ENCODE measurements at regions of chr19 and their contacts with region 1.

Region 1: GRCh38 chr19:36214386-36215275 is at the starts of genes ZNF146 and ZNF565:
- DNase-seq: peak; percentile 94
- H3K4me3 Mint-ChIP-seq: no peak within 1 kb of the TSS
- H3K27ac Mint-ChIP-seq: no peak within 1 kb of the TSS
- H3K4me1 Mint-ChIP-seq: no peaks in the 10 kb centered on the region
- H3K27me3 Mint-ChIP-seq: no peaks in the 10 kb centered on the region
- total RNA-seq, gene ZNF146: 82.5 and 94.0 TPM in 2 replicates
- total RNA-seq, gene ZNF565: 2.1 and 2.4 TPM in 2 replicates

Region 2: DNA sequence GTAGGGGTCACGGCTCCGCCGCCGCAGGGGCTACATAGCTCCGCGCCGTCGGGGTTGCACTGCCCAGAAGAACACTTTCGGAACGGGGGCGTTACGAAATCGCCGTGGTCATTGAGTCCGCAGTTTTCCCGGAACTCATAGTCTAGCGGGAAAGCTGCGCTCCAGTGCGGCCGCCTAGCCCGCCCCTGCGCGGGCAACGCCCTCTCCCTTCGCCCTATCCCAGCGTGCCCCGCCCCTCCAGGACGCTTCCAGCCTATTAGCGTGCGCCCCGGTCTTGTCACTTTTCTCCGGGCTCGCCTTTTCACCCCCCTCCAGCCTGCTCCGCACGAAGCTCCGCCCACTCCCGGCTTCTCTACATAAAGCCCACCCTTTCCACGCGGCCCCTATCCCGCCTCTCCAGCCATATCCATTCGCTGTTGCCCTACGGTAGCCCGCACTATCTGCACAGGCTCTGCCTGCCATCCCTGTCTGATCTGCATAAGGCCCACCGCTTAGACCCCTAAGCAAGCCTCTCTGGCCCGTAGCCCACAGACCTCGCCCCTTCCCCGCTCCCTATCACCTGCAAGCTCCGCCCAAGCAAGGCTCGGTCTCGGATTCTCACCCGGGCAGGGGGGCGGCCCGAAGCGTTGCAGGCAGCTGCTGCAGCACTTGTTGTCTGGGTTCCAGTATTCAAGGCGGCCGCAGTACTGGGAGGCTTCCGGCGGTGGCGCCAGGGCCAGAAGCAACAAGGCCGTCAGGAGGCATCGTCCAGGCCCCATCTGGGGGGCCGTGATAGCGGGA is 474.0 kb before region 1 on chr19:
- intact Hi-C with region 1: loop called (anchors 5 kb)
- DNase-seq: peak; percentile 95
- H3K4me3 Mint-ChIP-seq: peak overlapping the region; percentile 93
- H3K27ac Mint-ChIP-seq: peak overlapping the region; percentile 93
- H3K4me1 Mint-ChIP-seq: peaks cover 23% of the 10 kb centered on the region
- H3K27me3 Mint-ChIP-seq: peaks cover 2% of the 10 kb centered on the region

Region 3: DNA sequence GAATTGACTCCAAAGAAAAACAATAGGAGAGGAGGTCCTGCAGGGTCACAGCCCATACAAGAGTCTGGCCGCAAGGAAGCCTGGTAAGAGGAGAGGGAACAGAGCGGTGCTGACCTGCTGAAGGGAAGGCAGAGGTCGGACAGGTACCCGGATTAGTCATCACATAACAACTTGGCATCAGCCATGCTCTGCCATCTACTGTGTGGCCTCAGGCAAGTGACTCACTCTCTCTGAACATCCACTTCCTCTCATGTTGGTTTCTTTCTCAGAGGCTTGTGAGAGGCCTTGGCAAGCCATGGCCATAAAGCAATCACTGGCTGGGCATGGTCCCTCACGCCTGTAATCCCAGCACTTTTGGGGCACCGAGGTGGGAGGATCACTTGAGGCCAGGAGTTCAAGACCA is 82.1 kb before region 1 on chr19:
- intact Hi-C with region 1: loop called (anchors 1 kb)
- DNase-seq: peak; percentile 17
- H3K4me3 Mint-ChIP-seq: peak overlapping the region; percentile 7
- H3K27ac Mint-ChIP-seq: peak overlapping the region; percentile 78
- H3K4me1 Mint-ChIP-seq: peaks cover 30% of the 10 kb centered on the region
- H3K27me3 Mint-ChIP-seq: peaks cover 1% of the 10 kb centered on the region

Region 4: DNA sequence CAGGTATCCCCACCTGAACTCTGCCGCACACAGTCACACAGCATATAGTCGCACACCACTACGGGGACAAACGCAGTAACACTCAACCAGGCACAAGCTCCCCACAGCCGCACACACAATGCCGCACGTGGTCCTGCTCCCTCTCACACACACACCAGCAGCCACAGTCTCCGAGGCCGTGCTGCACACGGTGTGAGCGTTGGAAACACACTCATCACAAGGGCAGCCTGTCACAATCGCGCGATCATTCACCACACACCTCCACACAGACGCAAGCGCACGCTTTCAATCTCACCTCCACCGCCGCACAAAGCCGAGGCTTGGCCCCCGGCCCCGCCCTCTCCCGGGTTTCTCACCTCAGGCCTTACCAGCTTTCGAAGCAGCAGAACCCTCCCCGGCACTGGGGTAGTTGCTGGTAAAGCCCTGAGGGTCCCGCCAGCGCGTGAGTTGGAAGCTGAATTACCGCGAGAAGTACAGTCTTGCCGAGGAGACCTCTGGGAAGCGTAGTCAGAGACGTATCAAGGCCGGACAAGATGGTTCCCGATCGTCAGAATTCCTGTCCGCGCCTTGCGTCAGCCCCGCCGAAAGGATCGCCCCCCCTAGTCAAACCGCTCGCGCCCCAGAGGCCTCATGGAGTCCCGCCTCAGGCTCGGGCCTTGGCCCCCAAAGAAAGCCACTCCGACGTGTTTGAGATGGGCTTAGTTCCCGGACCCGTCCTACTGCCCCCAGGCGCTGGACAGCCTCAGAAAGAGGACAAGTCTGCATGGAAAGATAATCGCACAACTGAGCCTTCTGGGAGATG is 274.7 kb after region 1 on chr19 and contains the start of gene ZNF566:
- intact Hi-C with region 1: loop called (anchors 1 kb)
- DNase-seq: peak; percentile 88
- H3K4me3 Mint-ChIP-seq: peak within 1 kb of the TSS; percentile 96
- H3K27ac Mint-ChIP-seq: peak within 1 kb of the TSS; percentile 97
- H3K4me1 Mint-ChIP-seq: peaks cover 18% of the 10 kb centered on the region
- H3K27me3 Mint-ChIP-seq: no peaks in the 10 kb centered on the region
- total RNA-seq, gene ZNF566: 6.9 and 8.7 TPM in 2 replicates

Region 5: GRCh38 chr19:36687214-36688056 is 472.8 kb after region 1 on chr19 and contains the start of gene ZNF567:
- intact Hi-C with region 1: loop called (anchors 1 kb)
- DNase-seq: peak; percentile 97
- H3K4me3 Mint-ChIP-seq: peak within 1 kb of the TSS; percentile 95
- H3K27ac Mint-ChIP-seq: peak within 1 kb of the TSS; percentile 91
- H3K4me1 Mint-ChIP-seq: peaks cover 24% of the 10 kb centered on the region
- H3K27me3 Mint-ChIP-seq: peaks cover 2% of the 10 kb centered on the region
- total RNA-seq, gene ZNF567: 5.8 and 8.5 TPM in 2 replicates

Region 6: DNA sequence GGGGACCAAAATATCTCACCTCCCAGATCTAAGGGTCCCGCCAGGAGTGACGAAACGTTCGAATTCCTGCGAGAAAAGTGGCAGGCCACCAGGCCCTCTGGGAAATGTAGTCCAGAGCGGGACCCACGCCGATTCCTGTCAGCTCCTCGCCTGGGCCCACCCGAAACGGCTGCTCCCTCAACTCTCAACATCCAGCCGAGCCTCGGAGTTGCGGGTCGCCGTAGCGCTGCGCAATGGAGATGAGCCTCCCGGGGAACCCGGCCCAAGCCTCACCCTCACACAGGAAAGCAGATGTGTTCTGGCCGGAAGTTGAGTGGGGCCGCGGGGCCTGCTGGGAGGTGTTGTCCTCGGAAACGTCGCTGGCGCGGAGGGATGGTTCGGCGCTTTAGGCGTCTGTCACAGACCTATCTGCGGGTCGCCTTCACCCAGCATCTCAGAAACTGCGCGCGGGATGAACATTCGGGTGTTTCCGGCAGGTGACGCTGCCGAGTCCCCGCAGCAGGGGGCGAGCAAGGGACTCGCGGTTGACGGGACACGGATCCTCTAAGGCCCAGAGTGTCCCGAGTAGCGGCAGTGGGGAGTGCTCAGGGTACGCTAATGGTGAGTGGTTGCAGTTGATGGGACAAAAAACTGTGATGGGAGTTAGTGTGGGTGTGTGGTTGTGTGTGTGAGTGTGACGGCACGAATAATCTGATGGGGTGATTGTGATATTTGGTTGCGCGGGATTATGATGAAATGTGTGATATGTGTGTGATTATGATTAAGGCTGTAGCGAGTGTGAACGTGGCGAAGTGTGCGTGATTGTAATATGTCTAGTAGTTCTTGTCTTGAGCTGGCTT is 701.6 kb after region 1 on chr19 and contains the starts of genes ZNF568 and ZNF829:
- intact Hi-C with region 1: loop called (anchors 1 kb)
- DNase-seq: peak; percentile 92
- H3K4me3 Mint-ChIP-seq: peak within 1 kb of the TSS; percentile 92
- H3K27ac Mint-ChIP-seq: peak within 1 kb of the TSS; percentile 95
- H3K4me1 Mint-ChIP-seq: peaks cover 21% of the 10 kb centered on the region
- H3K27me3 Mint-ChIP-seq: no peaks in the 10 kb centered on the region
- total RNA-seq, gene ZNF568: 4.4 and 4.9 TPM in 2 replicates
- total RNA-seq, gene ZNF829: 5.3 and 5.4 TPM in 2 replicates

Region 7: GRCh38 chr19:37370880-37371661 is 1156.4 kb after region 1 on chr19 and contains the start of gene ZNF527:
- intact Hi-C with region 1: loop called (anchors 2 kb)
- DNase-seq: peak; percentile 96
- H3K4me3 Mint-ChIP-seq: peak within 1 kb of the TSS; percentile 99
- H3K27ac Mint-ChIP-seq: peak within 1 kb of the TSS; percentile 87
- H3K4me1 Mint-ChIP-seq: peaks cover 13% of the 10 kb centered on the region
- H3K27me3 Mint-ChIP-seq: no peaks in the 10 kb centered on the region
- total RNA-seq, gene ZNF527: 3.9 and 4.5 TPM in 2 replicates